ENCODE measurements at regions of chr19 and their contacts with region 1.

Region 1: GRCh38 chr19:45902651-45903625 is 525 bp upstream of the MYPOP start:
- DNase-seq: peak; percentile 99
- ATAC-seq: peak; percentile 90
- H3K4me3 Mint-ChIP-seq: peak overlapping the region; percentile 92
- H3K27ac Mint-ChIP-seq: peak overlapping the region; percentile 84
- H3K4me1 Mint-ChIP-seq: peaks cover 21% of the 10 kb centered on the region
- H3K27me3 Mint-ChIP-seq: no peaks in the 10 kb centered on the region

Region 2: DNA sequence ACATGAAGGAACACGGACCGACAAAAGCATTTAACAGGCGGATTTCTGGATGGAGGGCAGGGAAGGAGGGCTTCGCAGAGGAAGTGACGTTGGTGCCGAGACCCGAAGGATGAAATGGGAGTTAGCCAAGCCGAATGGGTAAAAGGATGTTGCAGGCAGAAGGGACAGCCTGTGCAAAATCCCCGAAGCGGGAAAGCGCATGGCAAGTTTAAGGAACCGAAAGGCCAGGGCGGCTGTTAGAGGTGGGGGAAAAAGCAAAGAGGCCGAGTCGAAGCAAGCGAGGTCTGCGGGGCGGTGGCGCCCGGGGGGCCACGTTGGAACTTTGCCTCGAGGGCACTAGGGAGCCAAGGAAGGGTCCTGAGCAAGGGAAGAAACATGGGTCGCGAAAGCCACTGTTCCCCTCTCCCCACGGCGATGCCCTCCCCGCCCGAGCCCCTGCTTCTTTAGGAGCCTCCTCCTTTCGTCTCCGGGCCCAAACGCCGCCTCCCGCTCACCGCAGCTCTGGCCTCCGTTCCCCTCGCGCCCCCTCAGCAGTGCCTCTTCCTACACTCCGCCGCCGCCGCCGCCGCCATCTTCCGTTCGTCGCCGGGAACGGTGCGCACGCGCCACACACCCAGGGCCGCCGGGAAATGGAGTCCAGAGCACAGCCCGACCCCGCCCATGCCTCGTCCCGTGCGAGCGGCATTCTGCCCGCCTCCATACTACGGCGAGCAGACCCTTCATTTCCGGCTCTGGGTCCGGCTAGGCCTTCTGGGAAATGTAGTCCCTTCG is 40.2 kb before region 1 on chr19 and contains the start of gene SYMPK:
- CTCF ChIA-PET with region 1: interaction called, 16 read pairs
- DNase-seq: peak; percentile 100
- ATAC-seq: peak; percentile 96
- H3K4me3 Mint-ChIP-seq: peak within 1 kb of the TSS; percentile 98
- H3K27ac Mint-ChIP-seq: peak within 1 kb of the TSS; percentile 99
- H3K4me1 Mint-ChIP-seq: peaks cover 36% of the 10 kb centered on the region
- H3K27me3 Mint-ChIP-seq: peaks cover 34% of the 10 kb centered on the region
- total RNA-seq, gene SYMPK: 119 to 125 TPM

Region 3: GRCh38 chr19:45886427-45887199 is 16.3 kb before region 1 on chr19:
- CTCF ChIA-PET with region 1: interaction called, 65 read pairs
- DNase-seq: peak; percentile 97
- ATAC-seq: peak; percentile 85
- H3K4me3 Mint-ChIP-seq: peak overlapping the region; percentile 88
- H3K27ac Mint-ChIP-seq: peak overlapping the region; percentile 96
- H3K4me1 Mint-ChIP-seq: peaks cover 20% of the 10 kb centered on the region
- H3K27me3 Mint-ChIP-seq: no peaks in the 10 kb centered on the region

Region 4: DNA sequence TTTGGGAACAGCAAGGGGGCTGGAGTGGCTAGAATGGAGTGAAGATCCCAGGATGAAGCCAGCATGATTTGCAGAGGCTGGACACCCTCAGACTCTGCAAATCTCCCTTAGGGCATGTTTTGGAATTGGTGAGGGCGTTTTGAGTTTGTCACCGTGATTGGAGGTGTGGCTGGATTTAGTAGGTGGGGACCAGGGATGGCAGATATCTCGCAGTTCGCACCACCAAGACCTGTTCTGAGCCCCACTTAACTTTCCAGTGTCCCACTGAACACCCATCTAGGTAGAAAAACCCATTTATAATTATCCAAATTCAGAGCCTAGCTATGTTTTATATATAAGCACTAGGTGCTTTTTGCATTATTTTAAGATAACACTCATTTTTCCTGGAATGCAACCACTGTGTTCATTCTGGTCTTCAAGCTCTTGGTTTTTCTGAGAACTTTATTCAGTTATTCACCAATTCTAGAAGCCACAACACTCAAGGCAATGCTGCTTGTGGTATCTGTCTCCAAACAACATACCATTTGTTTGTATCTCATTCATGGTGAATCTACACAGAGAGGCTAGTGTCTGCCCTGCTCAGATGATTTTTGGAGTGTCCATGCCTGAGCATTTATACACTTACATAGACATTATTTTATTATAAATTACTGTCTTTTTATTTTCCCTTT is 14.6 kb after region 1 on chr19:
- CTCF ChIA-PET with region 1: interaction called, 12 read pairs
- DNase-seq: peak; percentile 71
- ATAC-seq: peak; percentile 78
- H3K4me3 Mint-ChIP-seq: peak overlapping the region; percentile 36
- H3K27ac Mint-ChIP-seq: peak overlapping the region; percentile 78
- H3K4me1 Mint-ChIP-seq: peaks cover 49% of the 10 kb centered on the region
- H3K27me3 Mint-ChIP-seq: peaks cover 21% of the 10 kb centered on the region

Region 5: GRCh38 chr19:45952686-45953505 is 50.0 kb after region 1 on chr19:
- CTCF ChIA-PET with region 1: no interaction called
- DNase-seq: peak; percentile 73
- ATAC-seq: peak; percentile 73
- H3K4me3 Mint-ChIP-seq: peak overlapping the region; percentile 65
- H3K27ac Mint-ChIP-seq: peak overlapping the region; percentile 41
- H3K4me1 Mint-ChIP-seq: peaks cover 19% of the 10 kb centered on the region
- H3K27me3 Mint-ChIP-seq: peaks cover 22% of the 10 kb centered on the region

Region 6: DNA sequence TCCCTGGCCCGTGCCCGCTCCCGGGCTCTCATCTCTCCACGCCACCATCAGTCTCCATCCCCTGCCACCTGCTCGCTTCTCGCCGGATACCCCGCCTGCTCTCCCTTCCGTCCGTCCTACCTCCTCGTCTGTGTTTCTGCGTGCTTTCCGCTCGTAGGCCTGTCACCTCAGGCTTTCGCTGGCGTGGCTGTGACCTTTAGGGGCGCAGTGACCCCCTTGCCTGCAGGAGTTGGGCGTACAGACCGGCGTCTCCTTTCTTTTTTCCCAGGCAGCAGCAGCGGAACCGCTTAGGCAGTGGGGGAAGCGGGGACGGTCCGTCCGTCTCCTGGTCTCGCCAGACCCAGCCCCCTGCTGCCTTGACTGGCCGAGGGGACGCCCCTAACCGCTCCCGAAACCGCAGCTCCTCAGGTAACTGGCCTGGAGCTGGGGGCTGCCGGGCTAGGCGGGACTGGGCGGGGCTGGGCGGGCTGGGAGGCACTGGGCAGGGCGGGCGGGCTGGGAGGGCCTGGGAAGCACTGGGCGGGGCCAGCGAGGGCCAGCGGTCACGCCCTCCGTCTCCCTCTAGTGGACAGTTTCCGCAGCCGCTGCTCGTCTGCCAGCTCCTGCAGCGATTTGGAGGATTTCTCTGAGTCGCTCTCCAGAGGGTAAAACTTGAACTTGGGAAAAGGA is 113.6 kb after region 1 on chr19:
- CTCF ChIA-PET with region 1: interaction called, 11 read pairs
- DNase-seq: peak; percentile 85
- ATAC-seq: peak; percentile 69
- H3K4me3 Mint-ChIP-seq: peak overlapping the region; percentile 78
- H3K27ac Mint-ChIP-seq: peak overlapping the region; percentile 61
- H3K4me1 Mint-ChIP-seq: peaks cover 15% of the 10 kb centered on the region
- H3K27me3 Mint-ChIP-seq: peaks cover 14% of the 10 kb centered on the region

Measured in activated CD8-positive, alpha-beta memory T cell treated with anti-CD3 and anti-CD28 coated beads, Interleukin-2, amount 10 ng/mL, durations not matched to agents 7 days and 5 days (primary cell).